MCF 10A (cell line): ENCODE measurements at regions of chr19 and their contacts with region 1.

Region 1: GRCh38 chr19:38229585-38230073 is 5.6 kb upstream of the DPF1 start:
- DNase-seq: peak; percentile 59
- H3K4me3 Mint-ChIP-seq: no peak overlapping the region
- H3K27ac Mint-ChIP-seq: no peak overlapping the region
- H3K4me1 Mint-ChIP-seq: peaks cover 13% of the 10 kb centered on the region
- H3K27me3 Mint-ChIP-seq: peaks cover 47% of the 10 kb centered on the region
- CTCF ChIP-seq: no peak

Region 2: DNA sequence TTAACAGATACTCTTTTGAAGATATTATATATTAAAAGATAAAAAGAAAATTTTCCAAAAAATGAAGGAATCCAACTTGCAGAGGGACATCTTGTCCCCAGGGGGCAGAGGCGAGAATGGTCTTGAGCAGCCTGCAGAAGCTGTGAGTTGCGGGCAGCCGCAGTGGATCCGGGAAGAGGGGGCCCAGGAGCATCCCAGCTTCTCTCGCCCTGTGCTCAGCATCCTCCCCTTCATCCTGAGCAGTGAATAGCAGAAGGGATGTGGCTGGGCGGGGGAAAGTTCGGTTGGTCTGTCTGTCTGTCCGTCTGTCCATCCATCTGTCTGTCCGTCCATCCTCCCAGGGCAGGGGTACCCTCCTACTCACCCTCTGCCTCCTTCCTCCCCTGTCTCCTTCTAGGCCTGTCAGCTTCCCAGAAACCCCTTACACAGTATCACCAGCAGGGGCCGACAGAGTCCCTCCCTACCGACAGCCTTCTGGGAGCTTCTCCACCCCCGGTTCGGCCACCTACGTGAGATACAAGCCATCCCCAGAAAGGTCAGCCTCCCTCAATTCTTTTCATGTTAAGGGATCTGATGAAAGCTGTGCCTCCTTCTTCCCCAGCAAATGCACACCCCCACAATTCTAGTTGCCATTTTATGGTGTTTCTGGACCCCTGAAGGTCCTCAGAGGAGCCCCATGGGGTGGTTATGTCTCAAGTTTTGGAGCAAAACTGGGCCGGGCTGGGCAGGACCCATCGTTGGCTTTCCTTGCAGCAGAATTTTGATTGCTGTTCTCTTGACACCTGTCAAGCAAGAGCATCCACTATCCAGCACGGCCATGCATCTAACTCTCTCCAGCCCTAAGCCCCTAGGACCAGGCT is 87.2 kb before region 1 on chr19:
- CTCF ChIA-PET with region 1: interaction called, 4 read pairs
- POLR2A ChIA-PET with region 1: no interaction called
- intact Hi-C with region 1: loop called (anchors 5 kb)
- DNase-seq: peak; percentile 76
- H3K4me3 Mint-ChIP-seq: no peak overlapping the region
- H3K27ac Mint-ChIP-seq: no peak overlapping the region
- H3K4me1 Mint-ChIP-seq: peaks cover 17% of the 10 kb centered on the region
- H3K27me3 Mint-ChIP-seq: no peaks in the 10 kb centered on the region
- CTCF ChIP-seq: peak; percentile 83

Region 3: DNA sequence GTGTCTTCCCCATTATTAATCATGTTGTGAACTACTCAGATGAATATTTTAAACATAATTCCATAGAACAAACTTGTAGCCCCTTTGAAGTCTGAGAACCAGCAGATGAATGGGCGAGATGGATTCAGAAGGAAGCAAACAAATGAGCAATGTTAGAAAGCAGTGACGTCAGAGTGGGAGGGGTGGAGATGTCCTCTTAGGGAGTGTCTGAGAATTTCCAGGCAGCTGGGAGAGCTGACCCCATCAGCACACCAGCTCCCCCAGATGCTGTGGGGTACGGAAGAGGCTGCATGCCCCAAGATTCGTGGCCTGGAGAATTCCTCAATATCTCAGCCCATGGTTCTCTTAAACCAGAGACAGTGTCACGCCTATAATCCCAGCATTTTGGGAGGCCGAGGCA is 74.2 kb before region 1 on chr19:
- CTCF ChIA-PET with region 1: no interaction called
- POLR2A ChIA-PET with region 1: no interaction called
- intact Hi-C with region 1: no loop called
- DNase-seq: no peak
- H3K4me3 Mint-ChIP-seq: no peak overlapping the region
- H3K27ac Mint-ChIP-seq: no peak overlapping the region
- H3K4me1 Mint-ChIP-seq: no peaks in the 10 kb centered on the region
- H3K27me3 Mint-ChIP-seq: no peaks in the 10 kb centered on the region
- CTCF ChIP-seq: no peak

Region 4: GRCh38 chr19:38245826-38246498 is 16.3 kb after region 1 on chr19:
- CTCF ChIA-PET with region 1: interaction called, 23 read pairs
- POLR2A ChIA-PET with region 1: interaction called, 3 read pairs
- intact Hi-C with region 1: no loop called
- DNase-seq: no peak
- H3K4me3 Mint-ChIP-seq: no peak overlapping the region
- H3K27ac Mint-ChIP-seq: no peak overlapping the region
- H3K4me1 Mint-ChIP-seq: peaks cover 16% of the 10 kb centered on the region
- H3K27me3 Mint-ChIP-seq: no peaks in the 10 kb centered on the region
- CTCF ChIP-seq: no peak

Region 5: GRCh38 chr19:38527466-38528136 is 298.0 kb after region 1 on chr19:
- CTCF ChIA-PET with region 1: no interaction called
- POLR2A ChIA-PET with region 1: no interaction called
- intact Hi-C with region 1: loop called (anchors 10 kb)
- DNase-seq: no peak
- H3K4me3 Mint-ChIP-seq: no peak overlapping the region
- H3K27ac Mint-ChIP-seq: no peak overlapping the region
- H3K4me1 Mint-ChIP-seq: no peaks in the 10 kb centered on the region
- H3K27me3 Mint-ChIP-seq: no peaks in the 10 kb centered on the region
- CTCF ChIP-seq: no peak

Region 6: DNA sequence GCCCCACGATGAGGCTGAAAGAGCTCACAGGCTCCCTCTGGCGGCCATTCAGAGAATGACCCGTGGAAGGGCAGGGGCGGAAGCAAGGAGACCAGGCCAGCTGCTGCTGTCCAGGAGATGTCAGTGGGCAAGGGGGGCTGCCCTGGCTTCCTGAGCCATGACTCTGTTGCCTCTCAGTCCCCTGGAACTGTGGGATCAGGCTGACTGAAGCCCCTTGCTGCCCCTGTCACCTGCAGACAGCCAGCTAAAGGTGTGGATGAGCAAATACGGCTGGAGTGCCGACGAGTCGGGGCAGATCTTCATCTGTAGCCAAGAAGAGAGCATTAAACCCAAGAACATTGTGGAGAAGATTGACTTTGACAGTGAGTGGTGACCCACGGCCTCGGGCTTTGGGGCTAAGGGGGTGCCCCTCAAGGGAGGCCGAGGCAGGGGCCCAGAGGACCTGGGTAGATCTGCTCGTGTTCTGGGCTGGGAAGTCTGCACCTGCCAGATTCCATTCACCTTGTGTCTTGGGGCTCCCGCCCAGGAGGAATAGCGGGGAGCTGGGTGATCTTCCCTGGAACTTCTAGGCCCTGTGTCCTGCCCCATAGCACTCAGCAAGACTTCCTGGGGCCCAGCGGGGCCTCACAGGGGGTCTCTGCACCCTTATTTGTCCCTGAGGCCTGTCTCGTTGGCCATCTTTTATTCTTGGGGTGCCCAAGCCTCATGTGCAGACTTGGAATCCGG is 405.3 kb after region 1 on chr19:
- CTCF ChIA-PET with region 1: no interaction called
- POLR2A ChIA-PET with region 1: no interaction called
- intact Hi-C with region 1: loop called (anchors 10 kb)
- DNase-seq: peak; percentile 80
- H3K4me3 Mint-ChIP-seq: no peak overlapping the region
- H3K27ac Mint-ChIP-seq: peak overlapping the region; percentile 24
- H3K4me1 Mint-ChIP-seq: peaks cover 17% of the 10 kb centered on the region
- H3K27me3 Mint-ChIP-seq: no peaks in the 10 kb centered on the region
- CTCF ChIP-seq: peak; percentile 91